Natural killer cell (primary cell): ENCODE measurements at regions of chr4 and their contacts with region 1.

Region 1: GRCh38 chr4:72302981-72303704 is 265.9 kb downstream of the ADAMTS3 start:
- DNase-seq: peak in 1 of 2 donors; percentile 66
- ATAC-seq: peak; percentile 64 to 75 (median 68)
- H3K4me3 ChIP-seq: no peak overlapping the region
- H3K4me3 Mint-ChIP-seq: no peak overlapping the region
- H3K27ac ChIP-seq: no peak overlapping the region
- H3K27ac Mint-ChIP-seq: no peak overlapping the region
- H3K4me1 ChIP-seq: no peaks in the 10 kb centered on the region
- H3K4me1 Mint-ChIP-seq: no peaks in the 10 kb centered on the region
- H3K27me3 ChIP-seq: no peaks in the 10 kb centered on the region
- H3K27me3 Mint-ChIP-seq: no peaks in the 10 kb centered on the region
- CTCF ChIP-seq: peak; percentile 59

Region 2: GRCh38 chr4:70601422-70602039 is 1701.6 kb before region 1 on chr4:
- intact Hi-C with region 1: loop called (anchors 1 kb)
- DNase-seq: peak; percentile 37 to 82
- ATAC-seq: peak; percentile 84 to 89 (median 88)
- H3K4me3 ChIP-seq: no peak overlapping the region
- H3K4me3 Mint-ChIP-seq: no peak overlapping the region
- H3K27ac ChIP-seq: no peak overlapping the region
- H3K27ac Mint-ChIP-seq: no peak overlapping the region
- H3K4me1 ChIP-seq: no peaks in the 10 kb centered on the region
- H3K4me1 Mint-ChIP-seq: no peaks in the 10 kb centered on the region
- H3K27me3 ChIP-seq: no peaks in the 10 kb centered on the region
- H3K27me3 Mint-ChIP-seq: peaks cover 0 to 6% of the 10 kb centered on the region in 2 donors
- CTCF ChIP-seq: peak; percentile 63

Region 3: DNA sequence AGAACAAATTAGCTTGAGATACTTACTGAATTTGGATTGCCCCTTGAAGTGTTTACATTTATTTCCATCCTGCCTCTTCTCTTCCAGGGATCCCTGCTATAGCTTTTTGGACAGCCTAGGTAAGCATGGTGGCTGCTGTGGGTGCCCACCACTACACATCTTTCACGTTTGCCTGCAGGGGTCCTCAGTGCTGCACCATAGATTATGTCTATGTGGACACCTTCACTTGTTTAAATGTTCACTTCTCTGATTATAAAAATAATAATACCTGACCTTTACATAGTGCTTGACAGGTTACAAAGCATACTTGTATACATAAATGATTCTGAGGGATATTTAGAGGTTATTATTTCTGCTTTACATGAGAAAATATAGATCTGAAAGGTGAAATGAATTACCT is 1032.2 kb before region 1 on chr4:
- intact Hi-C with region 1: loop called (anchors 2 kb)
- DNase-seq: peak; percentile 31 to 60
- ATAC-seq: peak; percentile 62 to 82 (median 77)
- H3K4me3 ChIP-seq: no peak overlapping the region
- H3K4me3 Mint-ChIP-seq: no peak overlapping the region
- H3K27ac ChIP-seq: no peak overlapping the region
- H3K27ac Mint-ChIP-seq: no peak overlapping the region
- H3K4me1 ChIP-seq: peaks cover 16% of the 10 kb centered on the region
- H3K4me1 Mint-ChIP-seq: peaks cover 45 to 55% of the 10 kb centered on the region in 2 donors
- H3K27me3 ChIP-seq: no peaks in the 10 kb centered on the region
- H3K27me3 Mint-ChIP-seq: no peaks in the 10 kb centered on the region
- CTCF ChIP-seq: peak; percentile 53

Region 4: GRCh38 chr4:72286185-72286584 is 17.0 kb before region 1 on chr4:
- intact Hi-C with region 1: no loop called
- DNase-seq: no peak
- ATAC-seq: no peak
- H3K4me3 ChIP-seq: no peak overlapping the region
- H3K4me3 Mint-ChIP-seq: no peak overlapping the region
- H3K27ac ChIP-seq: no peak overlapping the region
- H3K27ac Mint-ChIP-seq: no peak overlapping the region
- H3K4me1 ChIP-seq: no peaks in the 10 kb centered on the region
- H3K4me1 Mint-ChIP-seq: no peaks in the 10 kb centered on the region
- H3K27me3 ChIP-seq: no peaks in the 10 kb centered on the region
- H3K27me3 Mint-ChIP-seq: peaks cover 0 to 5% of the 10 kb centered on the region in 2 donors
- CTCF ChIP-seq: no peak